Brain microvascular endothelial cell (primary cell): ENCODE measurements at regions of chr7 and their contacts with region 1.

Region 1: GRCh38 chr7:41705109-41705901 is 2.4 kb upstream of the INHBA start:
- DNase-seq: peak; percentile 89
- H3K4me3 ChIP-seq: peak overlapping the region; percentile 56
- H3K27ac ChIP-seq: peak overlapping the region; percentile 78
- H3K27me3 ChIP-seq: no peaks in the 10 kb centered on the region
- CTCF ChIP-seq: peak; percentile 88

Region 2: DNA sequence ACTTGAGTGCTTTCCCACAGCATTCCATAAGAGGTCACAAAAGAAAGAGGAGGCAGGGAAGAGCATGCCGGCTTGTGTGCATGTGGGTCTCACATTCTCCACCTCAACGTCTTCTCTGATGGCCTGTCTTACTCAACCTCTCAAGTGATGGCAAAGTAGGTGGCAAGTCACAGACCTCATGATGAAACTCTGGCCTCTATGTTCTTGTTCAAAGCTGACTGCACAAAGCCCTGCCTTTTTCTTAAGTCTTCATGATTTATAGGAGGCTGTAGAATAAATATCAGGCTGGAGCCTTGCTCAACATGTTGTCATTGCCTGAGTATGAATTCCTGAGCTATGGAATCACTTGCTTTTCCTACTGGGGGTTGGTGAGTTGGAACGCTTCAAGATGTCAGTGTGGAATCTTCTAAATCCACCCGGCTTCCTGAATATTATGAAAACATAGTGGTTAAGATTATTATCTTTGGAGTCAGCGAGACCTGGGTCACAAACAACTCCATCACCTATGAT is 211.2 kb after region 1 on chr7:
- in situ Hi-C with region 1: loop called (anchors 25 kb)
- DNase-seq: peak; percentile 96
- H3K4me3 ChIP-seq: no peak overlapping the region
- H3K27ac ChIP-seq: peak overlapping the region; percentile 97
- H3K27me3 ChIP-seq: no peaks in the 10 kb centered on the region
- CTCF ChIP-seq: no peak